Dorsolateral prefrontal cortex (tissue), 120 donors: ENCODE measurements at regions of chr1 and their contacts with region 1.

Region 1: GRCh38 chr1:45011837-45012638 is at the start of gene UROD:
- DNase-seq: peak; percentile 84 to 97 (median 94)
- H3K4me3 ChIP-seq: peak within 1 kb of the TSS; percentile 64 to 100 (median 97)
- H3K27ac ChIP-seq: peak within 1 kb of the TSS; percentile 52 to 94 (median 85)
- H3K27me3 ChIP-seq: no peaks in the 10 kb centered on the region
- CTCF ChIP-seq: peak in 39 of 56 donors; percentile 3 to 62 (median 35)
- total RNA-seq, gene UROD: 53.7 to 114 (median 90.3) TPM

Region 2: DNA sequence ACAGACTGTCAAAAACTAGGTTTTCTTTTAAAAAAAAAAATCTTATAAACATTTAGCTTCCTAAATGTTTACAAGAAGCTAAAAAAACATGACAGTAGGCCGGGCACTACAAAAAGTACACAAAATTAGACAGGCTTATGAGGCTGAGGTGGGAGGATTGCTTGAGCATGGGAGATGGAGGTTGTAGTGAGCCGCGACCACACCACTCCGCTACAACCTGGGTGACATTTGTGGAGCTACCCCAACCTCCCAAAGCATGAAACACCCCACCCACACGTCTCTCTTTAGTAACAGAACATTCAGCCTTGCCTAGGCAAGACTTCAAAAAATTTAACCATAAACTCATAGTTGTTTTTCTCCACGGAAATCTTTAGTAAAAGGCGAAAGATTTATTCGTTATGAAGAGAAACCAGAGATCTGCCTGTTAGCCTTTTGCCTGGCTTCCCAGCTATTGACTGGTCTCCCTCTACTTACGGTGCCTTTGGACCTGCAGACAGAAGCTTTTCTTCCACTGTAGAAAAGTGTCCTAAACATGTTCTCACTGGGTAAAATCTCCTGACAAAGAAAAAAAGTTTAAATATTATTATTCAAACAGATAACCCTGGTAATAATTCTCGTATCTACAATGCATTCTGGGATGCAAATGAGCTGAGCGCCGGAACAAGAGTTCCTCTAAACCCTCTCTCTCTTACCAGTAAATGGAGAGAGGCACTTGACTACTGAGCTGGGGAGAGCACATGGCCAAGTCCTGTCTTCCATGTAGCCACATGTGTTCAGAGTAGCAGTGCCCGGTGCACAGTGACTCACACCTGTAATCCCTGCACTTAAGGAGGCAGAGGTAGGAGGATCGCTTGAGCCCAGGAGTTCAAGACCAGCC is 290.3 kb before region 1 on chr1:
- intact Hi-C with region 1: loop called in 1 of 2 experiments (anchors 10 kb)
- DNase-seq: peak in 4 of 10 donors; percentile 17 to 56 (median 36)
- H3K4me3 ChIP-seq: peak overlapping the region in 1 of 59 donors; percentile 11
- H3K27ac ChIP-seq: peak overlapping the region in 42 of 59 donors; percentile 1 to 77 (median 54)
- H3K27me3 ChIP-seq: no peaks in the 10 kb centered on the region
- CTCF ChIP-seq: no peak

Region 3: GRCh38 chr1:44799770-44800584 is 212.1 kb before region 1 on chr1 and contains the start of gene PLK3:
- intact Hi-C with region 1: no loop called
- DNase-seq: peak; percentile 95 to 99 (median 98)
- H3K4me3 ChIP-seq: peak within 1 kb of the TSS; percentile 47 to 96 (median 85)
- H3K27ac ChIP-seq: peak within 1 kb of the TSS; percentile 70 to 98 (median 94)
- H3K27me3 ChIP-seq: no peaks in the 10 kb centered on the region
- CTCF ChIP-seq: peak; percentile 55 to 96 (median 87)
- total RNA-seq, gene PLK3: 3.7 to 23.1 (median 11.1) TPM

Region 4: DNA sequence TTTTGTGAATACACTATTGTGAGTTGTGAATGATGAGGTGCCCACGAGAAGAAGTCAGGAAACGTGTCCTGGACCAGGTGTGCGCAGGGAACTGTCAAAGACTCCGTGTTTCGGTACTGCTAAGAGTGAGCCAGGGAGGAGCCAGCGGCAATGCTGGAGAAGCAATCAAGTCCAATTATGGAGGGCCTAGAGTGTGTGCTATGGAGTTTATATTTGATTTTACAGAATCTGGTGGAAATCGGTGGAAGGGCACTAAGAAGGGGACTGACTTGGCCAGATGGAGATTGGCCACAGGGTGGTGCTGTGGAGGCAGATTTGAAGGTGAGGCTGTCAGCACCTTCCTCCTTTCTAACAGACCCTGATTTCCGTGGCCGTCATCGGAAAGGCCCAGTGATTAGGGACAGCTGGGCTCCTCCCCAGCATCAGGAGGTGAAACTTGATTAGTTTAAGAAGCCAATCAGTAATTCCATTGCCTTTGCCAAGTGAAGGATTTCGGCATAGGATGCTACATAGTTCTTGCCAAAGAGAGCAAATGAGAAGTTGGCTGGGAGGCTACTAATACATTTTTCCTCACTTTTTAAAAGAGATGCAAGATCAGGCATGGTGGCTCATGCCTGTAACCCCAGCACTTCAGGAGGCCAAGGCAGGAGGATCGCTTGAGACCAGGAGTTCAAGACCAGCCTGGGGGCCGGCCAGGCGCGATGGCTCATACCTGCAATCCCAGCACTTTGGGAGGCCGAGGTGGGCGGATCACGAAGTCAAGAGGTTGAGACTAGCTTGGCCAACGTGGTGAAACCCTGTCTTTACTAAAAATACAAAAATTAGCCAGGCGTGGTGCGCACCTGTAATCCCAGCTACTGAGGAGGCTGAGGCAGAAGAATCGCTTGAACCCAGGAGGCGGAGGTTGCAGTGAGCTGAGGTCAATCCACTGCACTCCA is 176.0 kb before region 1 on chr1:
- intact Hi-C with region 1: loop called (anchors 2 to 5 kb)
- DNase-seq: peak; percentile 63 to 87 (median 84)
- H3K4me3 ChIP-seq: peak overlapping the region in 8 of 59 donors; percentile 3 to 31 (median 21)
- H3K27ac ChIP-seq: peak overlapping the region in 5 of 59 donors; percentile 5 to 53 (median 21)
- H3K27me3 ChIP-seq: no peaks in the 10 kb centered on the region
- CTCF ChIP-seq: peak; percentile 59 to 95 (median 88)

Region 5: DNA sequence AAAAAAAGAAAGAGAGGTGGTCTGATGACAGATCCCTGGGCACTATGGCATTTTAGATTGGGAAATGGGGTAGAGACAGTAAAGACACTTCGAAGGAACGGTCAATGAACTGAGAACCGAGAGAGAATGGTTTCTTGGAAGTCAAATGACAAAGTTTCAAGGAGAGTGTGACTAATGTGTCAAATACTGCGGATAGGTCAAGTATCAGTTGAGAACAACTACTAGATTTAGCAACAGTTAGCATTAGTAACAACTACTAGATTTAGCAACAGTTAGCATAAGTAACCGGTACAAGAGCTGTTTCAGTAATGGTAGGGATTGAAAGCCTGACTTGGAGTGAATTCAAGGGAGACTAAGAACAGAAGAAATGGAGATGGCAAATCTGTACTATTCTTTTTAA is 35.0 kb after region 1 on chr1:
- intact Hi-C with region 1: no loop called
- DNase-seq: no peak
- H3K4me3 ChIP-seq: no peak overlapping the region
- H3K27ac ChIP-seq: no peak overlapping the region
- H3K27me3 ChIP-seq: no peaks in the 10 kb centered on the region
- CTCF ChIP-seq: no peak

Region 6: DNA sequence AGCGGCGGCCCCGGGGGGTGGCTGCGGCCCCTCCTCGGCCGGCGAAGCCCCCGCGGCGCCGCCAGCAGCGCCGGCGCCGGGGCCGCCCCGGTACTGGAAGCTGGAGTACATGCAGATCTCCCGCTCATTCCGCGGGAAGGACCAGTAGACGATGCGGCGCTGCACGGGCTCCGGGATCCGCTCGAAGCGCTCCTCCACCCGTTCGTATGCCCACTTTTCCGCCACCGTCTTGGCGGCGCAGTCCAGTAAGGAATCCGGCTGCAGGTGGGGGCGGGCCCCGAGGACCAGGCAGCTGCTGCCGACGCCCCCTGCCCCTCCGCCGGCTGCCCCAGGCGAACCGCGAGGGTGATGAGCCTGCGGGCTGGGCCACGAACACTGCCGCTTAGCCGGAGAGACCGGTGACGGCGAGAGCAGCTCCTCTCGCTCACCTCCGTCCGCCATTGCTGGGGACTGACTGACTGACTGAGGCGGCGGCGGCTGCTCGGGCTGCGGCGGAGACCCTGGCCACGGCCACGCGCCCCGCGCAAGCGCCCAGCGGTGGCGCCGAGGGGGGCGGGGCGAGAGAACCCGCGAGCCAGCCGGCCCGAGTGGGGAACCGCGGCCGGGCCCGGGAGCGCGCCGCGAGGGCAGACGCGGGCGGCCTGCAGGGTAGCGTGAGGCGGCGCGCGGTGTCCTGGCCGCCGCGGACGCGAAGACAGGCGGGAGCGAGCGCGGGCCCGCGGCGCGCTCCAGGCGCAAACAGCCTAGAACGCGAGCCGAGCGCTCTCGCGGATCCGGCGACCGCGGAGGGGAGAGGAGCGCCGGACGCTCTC is 194.1 kb after region 1 on chr1 and contains the start of gene ZSWIM5:
- intact Hi-C with region 1: loop called (anchors 5 kb)
- DNase-seq: peak; percentile 48 to 87 (median 71)
- H3K4me3 ChIP-seq: peak within 1 kb of the TSS; percentile 66 to 96 (median 89)
- H3K27ac ChIP-seq: peak within 1 kb of the TSS; percentile 79 to 98 (median 95)
- H3K27me3 ChIP-seq: no peaks in the 10 kb centered on the region
- CTCF ChIP-seq: peak in 5 of 56 donors; percentile 9 to 29 (median 13)
- total RNA-seq, gene ZSWIM5: 5.6 to 11.4 (median 8.0) TPM

Region 7: DNA sequence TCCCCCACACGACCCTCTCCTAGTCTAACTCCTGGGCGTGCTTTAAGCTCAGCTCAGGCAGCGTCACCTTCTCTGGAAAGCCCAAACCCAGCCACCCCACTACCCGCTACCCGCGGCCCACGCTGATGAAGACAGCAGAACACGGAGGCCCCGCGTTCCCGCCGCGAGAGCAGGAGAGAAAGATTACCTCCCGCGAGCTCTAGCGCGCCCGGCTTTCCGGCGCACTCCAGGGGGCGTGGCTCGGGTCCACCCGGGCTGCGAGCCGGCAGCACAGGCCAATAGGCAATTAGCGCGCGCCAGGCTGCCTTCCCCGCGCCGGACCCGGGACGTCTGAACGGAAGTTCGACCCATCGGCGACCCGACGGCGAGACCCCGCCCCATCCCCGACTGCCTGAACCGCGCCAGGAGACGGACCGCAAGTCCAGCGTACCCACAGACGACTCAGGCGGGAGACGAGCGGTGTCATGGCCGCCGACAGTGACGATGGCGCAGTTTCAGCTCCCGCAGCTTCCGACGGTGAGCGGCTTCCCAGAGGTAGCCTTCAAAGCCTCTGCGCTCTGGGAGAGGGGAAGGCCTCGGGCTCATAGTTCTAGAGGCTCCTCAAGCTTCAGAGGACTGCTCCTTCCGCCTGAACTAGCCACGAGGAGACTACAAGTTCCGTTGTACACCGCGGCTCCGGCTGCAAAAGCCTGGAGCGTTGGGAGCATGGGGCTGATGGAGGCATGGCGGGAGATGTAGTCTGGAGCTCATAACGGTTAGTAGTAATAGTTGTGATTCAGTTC is 327.9 kb after region 1 on chr1 and contains the starts of genes MUTYH and TOE1:
- intact Hi-C with region 1: loop called (anchors 2 to 5 kb)
- DNase-seq: peak; percentile 80 to 92 (median 89)
- H3K4me3 ChIP-seq: peak within 1 kb of the TSS; percentile 65 to 98 (median 89)
- H3K27ac ChIP-seq: peak within 1 kb of the TSS; percentile 84 to 100 (median 97)
- H3K27me3 ChIP-seq: no peaks in the 10 kb centered on the region
- CTCF ChIP-seq: peak in 42 of 56 donors; percentile 5 to 65 (median 26)
- total RNA-seq, gene MUTYH: 18.4 to 56.7 (median 33.5) TPM
- total RNA-seq, gene TOE1: 3.3 to 10.9 (median 7.1) TPM

Region 8: DNA sequence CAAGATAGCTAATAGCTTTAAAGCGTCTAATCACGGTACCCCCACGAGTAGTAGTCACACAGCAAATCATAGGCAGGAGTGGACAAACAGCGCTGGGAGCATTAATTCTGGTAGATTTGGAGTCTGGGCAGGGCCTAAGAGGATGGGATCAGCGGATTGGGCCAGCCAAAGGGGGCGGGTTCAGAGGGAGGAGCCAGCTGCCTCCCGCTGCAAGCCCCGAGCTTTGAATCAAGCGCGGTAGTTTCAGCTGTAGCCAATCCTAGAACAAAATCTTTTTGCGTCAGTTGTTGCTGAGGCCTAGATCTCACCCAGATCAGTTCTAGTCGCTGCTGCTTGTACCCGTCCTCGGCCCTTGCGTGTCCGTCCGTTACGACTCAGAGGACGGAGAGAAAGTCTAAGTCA is 571.2 kb after region 1 on chr1:
- intact Hi-C with region 1: loop called in 1 of 2 experiments (anchors 5 kb)
- DNase-seq: peak; percentile 84 to 97 (median 96)
- H3K4me3 ChIP-seq: peak overlapping the region; percentile 63 to 100 (median 93)
- H3K27ac ChIP-seq: peak overlapping the region in 58 of 59 donors; percentile 23 to 96 (median 84)
- H3K27me3 ChIP-seq: no peaks in the 10 kb centered on the region
- CTCF ChIP-seq: peak in 6 of 56 donors; percentile 14 to 36 (median 22)